ENCODE measurements at regions of chr1 and their contacts with region 1.

Region 1: GRCh38 chr1:21368515-21369289 is 71.2 kb upstream of the NBPF3 start:
- DNase-seq: peak; percentile 84 to 92 (median 91)
- ATAC-seq: peak; percentile 94 to 96
- H3K4me3 ChIP-seq: no peak overlapping the region
- H3K27ac ChIP-seq: no peak overlapping the region
- H3K4me1 ChIP-seq: no peaks in the 10 kb centered on the region
- H3K27me3 ChIP-seq: no peaks in the 10 kb centered on the region

Region 2: DNA sequence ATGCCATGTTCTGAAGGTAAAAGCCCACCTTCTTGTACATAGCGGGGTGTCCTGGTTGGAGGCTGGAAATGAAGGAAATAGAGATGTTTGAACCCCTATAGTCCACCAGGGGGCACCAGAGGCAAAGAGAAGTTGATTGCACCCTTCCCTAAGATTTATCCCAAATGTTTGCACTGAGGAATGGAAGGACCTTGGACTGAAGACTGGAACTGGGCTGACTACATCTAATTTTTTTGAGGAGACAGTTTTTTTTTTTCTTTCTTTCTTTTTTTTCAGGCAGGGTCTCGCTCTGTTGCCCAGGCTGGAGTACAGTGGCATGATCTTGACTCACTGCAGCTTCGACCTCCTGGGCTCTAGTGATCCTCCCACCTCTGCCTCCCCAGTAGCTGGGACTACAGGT is 136.7 kb before region 1 on chr1:
- intact Hi-C with region 1: loop called (anchors 1 to 5 kb)
- DNase-seq: peak in 2 of 3 donors; percentile 26 to 34
- ATAC-seq: peak; percentile 53 to 67
- H3K4me3 ChIP-seq: no peak overlapping the region
- H3K27ac ChIP-seq: no peak overlapping the region
- H3K4me1 ChIP-seq: no peaks in the 10 kb centered on the region
- H3K27me3 ChIP-seq: no peaks in the 10 kb centered on the region

Region 3: GRCh38 chr1:21255278-21255942 is 113.3 kb before region 1 on chr1:
- intact Hi-C with region 1: loop called in 2 of 4 experiments (anchors 2 to 5 kb)
- DNase-seq: peak; percentile 91 to 97 (median 95)
- ATAC-seq: peak; percentile 75 to 80
- H3K4me3 ChIP-seq: no peak overlapping the region
- H3K27ac ChIP-seq: peak overlapping the region; percentile 5
- H3K4me1 ChIP-seq: peaks cover 2% of the 10 kb centered on the region
- H3K27me3 ChIP-seq: no peaks in the 10 kb centered on the region

Region 4: GRCh38 chr1:21573971-21574465 is 205.3 kb after region 1 on chr1:
- intact Hi-C with region 1: loop called in 2 of 4 experiments (anchors 5 kb)
- DNase-seq: peak; percentile 83 to 94 (median 91)
- ATAC-seq: peak; percentile 84 to 87
- H3K4me3 ChIP-seq: no peak overlapping the region
- H3K27ac ChIP-seq: peak overlapping the region; percentile 93
- H3K4me1 ChIP-seq: peaks cover 6% of the 10 kb centered on the region
- H3K27me3 ChIP-seq: no peaks in the 10 kb centered on the region

Region 5: GRCh38 chr1:21919520-21919919 is 550.8 kb after region 1 on chr1:
- intact Hi-C with region 1: no loop called
- DNase-seq: peak in 1 of 3 donors; percentile 33
- ATAC-seq: peak in 1 of 2 donors; percentile 3
- H3K4me3 ChIP-seq: no peak overlapping the region
- H3K27ac ChIP-seq: peak overlapping the region; percentile 99
- H3K4me1 ChIP-seq: peaks cover 45% of the 10 kb centered on the region
- H3K27me3 ChIP-seq: no peaks in the 10 kb centered on the region